Heart left ventricle (tissue), 16 donors: ENCODE measurements at regions of chr9 and their contacts with region 1.

Region 1: DNA sequence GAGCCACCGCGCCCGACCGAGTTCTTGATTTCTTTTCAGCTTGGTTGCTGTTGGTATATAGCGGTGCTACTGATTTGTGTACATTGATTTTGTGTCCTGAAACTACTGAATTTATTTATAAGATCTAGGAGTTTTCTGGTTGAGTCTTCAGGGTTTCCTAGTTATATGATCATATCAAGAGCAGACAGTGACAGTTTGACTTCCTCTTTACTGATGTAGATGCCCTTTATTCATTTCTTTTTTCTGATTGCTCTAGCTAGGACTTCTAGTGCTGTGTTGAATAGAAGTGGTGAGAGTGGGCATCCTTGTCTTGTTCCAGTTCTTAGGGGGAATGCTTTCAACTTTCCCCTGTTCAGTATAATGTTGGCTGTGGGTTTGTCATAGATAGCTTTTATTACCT is 17.4 kb upstream of the LRRC19 start:
- DNase-seq: no peak
- ATAC-seq: no peak
- H3K4me3 ChIP-seq: no peak overlapping the region
- H3K27ac ChIP-seq: no peak overlapping the region
- H3K4me1 ChIP-seq: no peaks in the 10 kb centered on the region
- H3K27me3 ChIP-seq: no peaks in the 10 kb centered on the region
- CTCF ChIP-seq: no peak
- POLR2A ChIP-seq: no peak

Region 2: DNA sequence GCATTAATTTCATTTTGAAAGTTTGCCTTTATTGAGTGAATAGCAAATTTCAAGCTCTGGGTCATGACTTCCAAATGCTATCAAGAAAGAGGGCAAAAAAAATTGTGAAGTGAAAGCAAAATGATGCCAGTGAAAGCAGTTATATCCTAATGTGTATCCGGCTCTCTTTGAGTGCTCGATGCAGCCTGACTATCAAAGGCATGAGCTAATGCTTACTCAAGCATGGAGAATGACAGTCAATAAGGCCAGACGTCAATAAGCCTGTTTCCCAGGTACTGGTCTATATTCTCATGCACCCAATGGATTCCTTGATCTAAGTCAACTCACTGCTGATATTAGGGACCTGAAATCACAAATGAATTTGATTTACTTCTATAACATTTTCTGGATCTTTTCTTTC is 565.8 kb before region 1 on chr9:
- intact Hi-C with region 1: no loop called
- DNase-seq: no peak
- ATAC-seq: no peak
- H3K4me3 ChIP-seq: no peak overlapping the region
- H3K27ac ChIP-seq: no peak overlapping the region
- H3K4me1 ChIP-seq: no peaks in the 10 kb centered on the region
- H3K27me3 ChIP-seq: no peaks in the 10 kb centered on the region
- CTCF ChIP-seq: no peak
- POLR2A ChIP-seq: no peak

Region 3: GRCh38 chr9:26833792-26834191 is 189.1 kb before region 1 on chr9:
- intact Hi-C with region 1: no loop called
- DNase-seq: no peak
- ATAC-seq: no peak
- H3K4me3 ChIP-seq: no peak overlapping the region
- H3K27ac ChIP-seq: no peak overlapping the region
- H3K4me1 ChIP-seq: no peaks in the 10 kb centered on the region
- H3K27me3 ChIP-seq: no peaks in the 10 kb centered on the region
- CTCF ChIP-seq: no peak
- POLR2A ChIP-seq: no peak

Region 4: GRCh38 chr9:27558307-27558706 is 535.4 kb after region 1 on chr9:
- intact Hi-C with region 1: loop called in 1 of 10 experiments (anchors 10 kb)
- DNase-seq: no peak
- ATAC-seq: no peak
- H3K4me3 ChIP-seq: no peak overlapping the region
- H3K27ac ChIP-seq: no peak overlapping the region
- H3K4me1 ChIP-seq: no peaks in the 10 kb centered on the region
- H3K27me3 ChIP-seq: no peaks in the 10 kb centered on the region
- CTCF ChIP-seq: no peak
- POLR2A ChIP-seq: no peak